AG04450 (cell line): ENCODE measurements at regions of chr15 and their contacts with region 1.

Region 1: DNA sequence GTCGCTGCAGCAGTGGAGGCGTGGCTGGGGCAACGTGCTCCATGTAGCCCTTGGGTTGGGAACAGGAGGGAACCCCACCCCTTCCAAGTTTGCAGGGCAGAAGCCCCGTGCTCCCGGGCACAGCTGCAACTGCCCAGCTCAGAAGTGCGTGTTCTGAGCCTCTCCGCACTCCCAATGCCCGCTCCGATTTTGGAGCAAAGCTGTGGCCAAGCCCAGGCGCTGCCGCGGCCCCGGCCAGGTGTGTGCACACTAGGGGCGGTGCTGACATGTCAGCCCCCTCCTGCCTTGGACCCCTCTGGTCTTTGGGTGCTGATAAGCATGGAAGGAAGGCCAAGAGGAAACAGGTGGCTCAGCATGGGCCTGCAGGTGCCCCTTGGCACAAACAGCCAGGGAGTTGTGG is 87.6 kb upstream of the TTBK2 start:
- DNase-seq: no peak
- H3K4me3 ChIP-seq: no peak overlapping the region
- H3K27ac ChIP-seq: no peak overlapping the region
- H3K27me3 ChIP-seq: no peaks in the 10 kb centered on the region
- CTCF ChIP-seq: no peak

Region 2: GRCh38 chr15:42736793-42737528 is 271.2 kb before region 1 on chr15 and contains the start of gene CDAN1:
- CTCF ChIA-PET with region 1: no interaction called
- POLR2A ChIA-PET with region 1: no interaction called
- DNase-seq: peak; percentile 44
- H3K4me3 ChIP-seq: peak within 1 kb of the TSS; percentile 93
- H3K27ac ChIP-seq: peak within 1 kb of the TSS; percentile 87
- H3K27me3 ChIP-seq: no peaks in the 10 kb centered on the region
- CTCF ChIP-seq: no peak
- polyA plus RNA-seq, gene CDAN1: 3.9 and 4.4 TPM in 2 replicates

Region 3: GRCh38 chr15:42891569-42891968 is 116.6 kb before region 1 on chr15:
- CTCF ChIA-PET with region 1: no interaction called
- POLR2A ChIA-PET with region 1: no interaction called
- DNase-seq: no peak
- H3K4me3 ChIP-seq: no peak overlapping the region
- H3K27ac ChIP-seq: peak overlapping the region; percentile 31
- H3K27me3 ChIP-seq: no peaks in the 10 kb centered on the region
- CTCF ChIP-seq: no peak

Region 4: GRCh38 chr15:42964476-42964875 is 43.7 kb before region 1 on chr15:
- CTCF ChIA-PET with region 1: interaction called, 10 read pairs
- POLR2A ChIA-PET with region 1: no interaction called
- DNase-seq: no peak
- H3K4me3 ChIP-seq: no peak overlapping the region
- H3K27ac ChIP-seq: no peak overlapping the region
- H3K27me3 ChIP-seq: no peaks in the 10 kb centered on the region
- CTCF ChIP-seq: no peak